ENCODE measurements at regions of chr3 and their contacts with region 1.

Region 1: GRCh38 chr3:8970971-8971589 is 7.8 kb upstream of the RAD18 start:
- DNase-seq: no peak

Region 2: DNA sequence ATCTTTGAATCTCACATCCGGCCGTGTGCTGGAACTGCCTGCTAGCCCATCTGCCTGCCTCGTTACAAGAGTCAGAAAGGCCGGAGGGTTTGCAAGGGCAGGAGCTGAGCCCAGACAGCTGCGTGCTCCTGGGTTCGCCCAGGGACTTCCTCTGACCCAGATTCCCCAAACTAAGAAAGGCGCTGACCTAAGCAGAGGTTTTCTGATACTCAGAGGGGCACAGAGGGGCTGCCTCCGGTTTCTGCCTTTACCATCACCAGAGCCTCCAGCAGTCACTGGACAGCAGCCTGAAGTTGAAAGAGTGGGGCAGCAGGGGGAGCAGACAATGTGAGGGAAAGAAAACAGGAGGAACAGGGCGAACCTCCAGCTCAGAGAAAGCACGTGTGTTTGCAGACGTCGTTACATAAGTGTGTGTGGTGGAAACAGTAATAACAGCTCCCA is 25.6 kb after region 1 on chr3:
- intact Hi-C with region 1: loop called in 1 of 2 experiments (anchors 1 kb)
- DNase-seq: no peak

Region 3: GRCh38 chr3:9067352-9067975 is 96.4 kb after region 1 on chr3:
- intact Hi-C with region 1: loop called in 1 of 2 experiments (anchors 5 kb)
- DNase-seq: no peak

Region 4: DNA sequence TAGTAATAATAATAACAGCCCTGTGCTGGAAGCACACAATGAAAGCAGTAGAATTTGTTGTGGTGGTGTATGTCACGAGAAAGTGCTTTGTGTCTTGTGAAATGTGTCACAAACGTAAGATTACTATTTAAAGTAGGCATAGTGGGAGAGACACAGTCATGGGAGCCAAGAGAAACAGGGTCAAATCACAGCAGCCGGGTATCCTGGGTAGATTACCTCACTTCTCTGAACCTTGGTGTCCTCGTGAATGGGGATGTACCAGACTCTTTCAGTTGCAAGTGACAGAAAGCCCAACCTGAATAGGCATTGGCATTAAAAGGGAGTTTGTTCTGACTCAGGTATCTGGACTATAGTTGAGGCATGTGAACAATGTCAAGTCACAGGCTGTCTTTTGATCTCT is 307.4 kb after region 1 on chr3:
- intact Hi-C with region 1: no loop called
- DNase-seq: no peak

Region 5: DNA sequence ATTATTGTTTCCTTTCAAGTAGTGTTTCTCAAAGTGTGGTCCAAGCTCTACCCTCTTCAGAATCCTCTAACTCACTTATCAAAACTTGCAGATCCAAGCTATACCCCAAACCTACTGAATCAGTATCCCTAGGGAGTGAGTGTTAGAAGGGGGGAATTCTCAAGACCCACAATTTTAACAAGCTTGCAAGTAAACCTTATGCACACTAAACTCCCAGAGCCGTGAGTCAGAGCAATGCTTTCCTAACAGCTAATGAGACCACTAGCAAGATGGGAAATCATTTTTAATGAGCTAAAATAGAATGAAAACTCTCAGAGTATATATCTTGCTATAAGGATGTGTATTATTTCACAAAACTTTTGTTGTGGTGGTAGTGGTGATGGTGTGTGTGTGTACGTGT is 319.5 kb after region 1 on chr3:
- intact Hi-C with region 1: no loop called
- DNase-seq: no peak

Region 6: GRCh38 chr3:9302425-9303181 is 331.5 kb after region 1 on chr3:
- intact Hi-C with region 1: loop called in 1 of 2 experiments (anchors 5 kb)
- DNase-seq: peak; percentile 95